Activated T-helper 1 cell treated with anti-CD3 and anti-CD28 coated beads, Interleukin-12 subunit alpha, Interleukin-12 subunit beta, Interleukin-2, Interleukin-4 antibody, amounts not matched to agents 30 ng/mL and 10 ng/mL and 1 ng/mL, durations not matched to agents 14 hours and 24 hours and 36 hours (primary cell): ENCODE measurements at regions of chr7 and their contacts with region 1.

Region 1: DNA sequence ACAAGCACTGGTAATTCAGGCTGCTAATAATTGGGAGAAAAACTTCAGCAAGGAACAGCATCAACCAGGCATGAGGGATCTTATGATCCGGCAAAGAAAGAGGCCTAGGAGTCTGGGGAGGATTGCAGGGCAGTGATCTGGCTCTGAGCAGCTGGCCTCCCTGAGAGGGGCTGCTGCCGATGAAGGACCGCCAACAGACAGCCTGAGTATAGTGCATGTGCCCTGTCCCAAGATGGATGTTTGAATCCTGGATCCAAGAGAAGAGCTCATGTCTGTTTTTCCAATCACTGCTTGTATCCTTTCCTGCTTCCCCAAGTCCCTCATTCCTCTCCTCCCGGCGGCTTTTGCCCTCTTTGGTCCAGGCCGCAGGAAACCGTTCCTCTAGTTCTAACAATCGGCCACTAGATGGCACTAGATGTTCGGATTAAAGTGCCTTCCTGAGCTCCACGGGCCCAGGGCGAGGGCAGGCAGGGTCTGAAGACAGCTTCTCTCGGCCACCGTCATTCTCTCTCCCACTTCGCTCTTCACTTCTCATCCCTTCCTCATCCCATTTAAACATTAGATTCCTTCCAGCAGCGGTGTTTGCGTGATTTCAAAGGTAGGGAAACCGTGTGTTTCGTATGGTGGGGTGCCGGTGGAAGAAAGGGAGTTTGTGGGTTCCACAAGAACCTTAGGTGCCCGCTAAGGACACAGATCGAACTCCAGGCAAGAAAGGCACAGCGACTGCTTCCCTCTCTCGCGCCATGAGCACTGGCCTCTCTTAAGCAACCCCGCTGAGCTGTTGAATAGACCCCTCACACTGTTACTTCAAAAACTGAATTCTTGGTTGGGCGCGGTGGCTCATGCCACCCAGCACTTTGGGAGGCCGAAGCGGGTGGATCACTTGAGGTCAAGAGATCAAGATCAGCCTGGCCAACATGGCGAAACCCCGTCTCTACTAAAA is 82.4 kb downstream of the ADCYAP1R1 start:
- DNase-seq: peak; percentile 22
- H3K4me3 Mint-ChIP-seq: no peak overlapping the region
- H3K27ac Mint-ChIP-seq: no peak overlapping the region
- H3K4me1 Mint-ChIP-seq: no peaks in the 10 kb centered on the region
- H3K27me3 Mint-ChIP-seq: no peaks in the 10 kb centered on the region

Region 2: DNA sequence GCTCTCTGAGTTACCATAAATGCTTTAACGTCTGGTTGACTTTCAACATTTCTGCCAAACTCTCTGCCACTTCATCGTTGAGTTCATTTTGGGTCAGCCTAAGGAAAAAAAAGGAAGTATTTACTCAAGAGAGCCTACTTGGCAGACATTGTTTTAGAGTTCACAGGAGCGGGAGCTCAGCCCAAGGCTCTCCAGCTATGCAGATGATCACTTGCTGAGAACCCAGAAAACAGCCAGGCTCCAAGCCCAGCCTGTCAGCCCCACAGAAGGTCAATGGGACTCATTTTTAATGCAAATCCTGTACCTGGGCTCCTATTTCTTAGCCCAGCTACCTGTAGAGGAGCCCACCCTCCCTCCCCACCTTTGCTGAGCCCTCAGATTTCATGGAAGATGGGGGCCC is 701.4 kb before region 1 on chr7:
- intact Hi-C with region 1: no loop called
- DNase-seq: no peak
- H3K4me3 Mint-ChIP-seq: no peak overlapping the region
- H3K27ac Mint-ChIP-seq: no peak overlapping the region
- H3K4me1 Mint-ChIP-seq: no peaks in the 10 kb centered on the region
- H3K27me3 Mint-ChIP-seq: no peaks in the 10 kb centered on the region

Region 3: GRCh38 chr7:30984359-30985107 is 150.0 kb before region 1 on chr7:
- intact Hi-C with region 1: no loop called
- DNase-seq: no peak
- H3K4me3 Mint-ChIP-seq: no peak overlapping the region
- H3K27ac Mint-ChIP-seq: no peak overlapping the region
- H3K4me1 Mint-ChIP-seq: peaks cover 18% of the 10 kb centered on the region
- H3K27me3 Mint-ChIP-seq: peaks cover 28% of the 10 kb centered on the region

Region 4: GRCh38 chr7:31443457-31443856 is 308.9 kb after region 1 on chr7:
- intact Hi-C with region 1: loop called (anchors 1 kb)
- DNase-seq: no peak
- H3K4me3 Mint-ChIP-seq: no peak overlapping the region
- H3K27ac Mint-ChIP-seq: no peak overlapping the region
- H3K4me1 Mint-ChIP-seq: no peaks in the 10 kb centered on the region
- H3K27me3 Mint-ChIP-seq: no peaks in the 10 kb centered on the region

Region 5: GRCh38 chr7:31735991-31736982 is 601.8 kb after region 1 on chr7:
- intact Hi-C with region 1: loop called (anchors 2 kb)
- DNase-seq: no peak
- H3K4me3 Mint-ChIP-seq: no peak overlapping the region
- H3K27ac Mint-ChIP-seq: no peak overlapping the region
- H3K4me1 Mint-ChIP-seq: no peaks in the 10 kb centered on the region
- H3K27me3 Mint-ChIP-seq: no peaks in the 10 kb centered on the region